Lower leg skin (tissue), 4 donors: ENCODE measurements at regions of chr5 and their contacts with region 1.

Region 1: DNA sequence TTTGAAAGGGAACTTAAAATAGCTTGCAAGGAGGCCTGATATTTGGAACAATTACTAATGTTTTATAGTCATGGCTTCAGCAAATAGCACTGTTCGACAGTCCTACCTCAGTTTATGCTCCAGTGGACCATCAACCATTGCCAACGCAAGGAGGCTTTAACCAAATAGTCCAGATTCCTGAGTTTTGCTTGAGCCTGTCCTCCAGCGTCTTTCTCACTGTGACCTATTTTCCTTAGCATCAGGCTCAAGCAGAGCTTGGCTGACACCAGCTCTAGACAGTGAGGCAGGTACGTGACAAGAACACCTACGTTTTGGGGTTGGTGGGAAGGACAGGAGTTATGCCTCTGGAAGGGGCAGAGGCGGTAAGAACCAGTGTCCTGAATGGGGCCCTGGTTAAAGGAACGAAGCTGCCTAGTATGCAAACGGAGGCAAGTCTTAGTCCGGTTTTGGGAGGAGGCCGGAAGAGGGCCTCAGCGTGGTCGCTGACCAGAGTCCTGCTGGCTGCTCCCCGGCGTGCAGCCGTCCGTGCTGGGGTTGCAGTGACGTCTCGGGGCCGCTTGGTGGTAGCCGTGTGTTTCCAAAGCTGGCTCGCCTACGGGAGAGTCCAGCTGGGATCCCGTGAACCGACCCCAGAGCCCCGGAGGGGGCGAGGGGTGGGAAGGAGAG is 998 bp upstream of the FGF18 start:
- DNase-seq: peak; percentile 50 to 93
- H3K4me3 ChIP-seq: no peak overlapping the region
- CTCF ChIP-seq: peak in 1 of 3 donors; percentile 63
- POLR2A ChIP-seq: no peak

Region 2: DNA sequence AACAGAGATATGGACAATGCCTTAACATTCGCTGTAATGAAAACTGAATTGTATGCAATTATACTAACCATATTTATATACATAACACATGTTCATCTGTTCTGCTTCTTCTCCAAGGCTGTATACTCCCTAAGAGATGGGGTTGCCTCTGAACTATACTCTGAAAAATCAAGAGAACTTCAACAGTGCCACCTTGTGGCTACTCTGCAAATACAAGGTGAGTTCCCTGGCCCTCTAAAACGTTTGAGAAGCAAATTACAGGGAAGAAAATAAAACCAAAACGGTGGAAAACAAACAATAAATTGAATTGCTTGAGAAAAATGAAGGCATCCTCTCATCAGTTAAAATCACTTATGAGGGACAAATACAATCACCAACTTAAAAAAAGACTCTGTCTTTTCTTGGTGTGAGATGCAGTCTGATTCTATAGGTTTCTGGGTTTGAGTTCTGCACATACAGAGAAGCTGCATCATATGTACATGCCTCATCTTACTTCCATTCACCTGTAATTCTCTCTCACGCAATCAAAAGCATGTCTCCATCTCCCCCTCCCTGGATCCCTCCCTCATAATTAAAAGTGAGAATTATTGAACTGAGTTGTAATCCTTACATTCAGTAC is 489.4 kb after region 1 on chr5:
- intact Hi-C with region 1: loop called (anchors 5 kb)
- DNase-seq: no peak
- H3K4me3 ChIP-seq: no peak overlapping the region
- CTCF ChIP-seq: peak in 1 of 3 donors; percentile 14
- POLR2A ChIP-seq: no peak

Region 3: DNA sequence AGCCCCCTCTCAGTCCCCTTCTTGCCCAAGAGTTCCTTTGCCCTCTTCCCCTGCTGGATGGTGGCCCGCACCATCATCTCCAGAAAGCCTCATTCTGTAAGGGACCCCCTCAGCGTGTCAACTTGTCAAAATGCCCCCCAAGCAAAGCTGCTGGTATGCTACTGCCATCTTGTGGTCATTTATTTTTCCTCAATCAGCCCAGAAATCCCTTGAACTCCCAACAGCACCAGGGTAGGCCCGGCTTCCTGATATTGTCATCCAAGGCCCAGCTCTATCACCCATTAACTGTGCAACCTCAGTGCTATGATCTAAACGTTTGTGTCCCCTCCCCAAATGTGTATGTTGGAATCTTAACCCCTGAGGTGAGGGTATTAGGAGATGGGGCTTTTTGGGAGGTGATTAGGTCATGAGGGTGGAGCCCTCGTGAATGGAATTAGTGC is 641.2 kb after region 1 on chr5:
- intact Hi-C with region 1: loop called (anchors 10 kb)
- DNase-seq: peak in 1 of 2 donors; percentile 8
- H3K4me3 ChIP-seq: no peak overlapping the region
- CTCF ChIP-seq: no peak
- POLR2A ChIP-seq: no peak

Region 4: GRCh38 chr5:172255444-172255843 is 837.0 kb after region 1 on chr5:
- intact Hi-C with region 1: no loop called
- DNase-seq: no peak
- H3K4me3 ChIP-seq: no peak overlapping the region
- CTCF ChIP-seq: no peak
- POLR2A ChIP-seq: no peak

Region 5: GRCh38 chr5:172833686-172834414 is 1415.4 kb after region 1 on chr5 and contains the start of gene ERGIC1:
- intact Hi-C with region 1: no loop called
- DNase-seq: peak; percentile 73 to 97
- H3K4me3 ChIP-seq: peak within 1 kb of the TSS; percentile 83
- CTCF ChIP-seq: no peak
- POLR2A ChIP-seq: no peak
- total RNA-seq, gene ERGIC1: 62.9 to 114 (median 82.6) TPM